ENCODE measurements at regions of chr16 and their contacts with region 1.

Region 1: GRCh38 chr16:21708533-21709115 is 44.9 kb downstream of the OTOA start:
- DNase-seq: peak; percentile 76
- H3K4me3 Mint-ChIP-seq: no peak overlapping the region
- H3K27ac Mint-ChIP-seq: no peak overlapping the region
- H3K4me1 Mint-ChIP-seq: peaks cover 2% of the 10 kb centered on the region
- H3K27me3 Mint-ChIP-seq: no peaks in the 10 kb centered on the region
- CTCF ChIP-seq: peak; percentile 69

Region 2: DNA sequence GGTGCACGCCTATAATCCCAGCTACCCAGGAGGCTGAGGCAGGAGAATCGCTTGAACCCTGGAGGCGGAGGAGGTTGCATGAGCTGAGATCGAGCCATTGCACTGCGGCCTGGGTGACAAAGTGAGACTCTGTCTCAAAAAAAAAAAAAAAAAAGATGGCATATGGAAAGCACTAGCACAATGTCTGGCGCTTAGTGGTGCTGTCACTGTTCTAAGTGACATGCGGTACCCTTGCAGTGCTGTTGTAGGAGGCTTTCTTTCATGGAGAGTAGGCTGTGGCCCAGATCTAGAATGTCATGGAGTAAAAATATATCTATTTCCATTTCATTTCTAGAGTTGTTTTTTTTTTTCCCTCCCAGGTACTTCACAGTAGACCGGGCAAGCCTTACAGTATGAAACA is 123.8 kb before region 1 on chr16:
- CTCF ChIA-PET with region 1: interaction called, 22 read pairs
- POLR2A ChIA-PET with region 1: no interaction called
- intact Hi-C with region 1: loop called (anchors 1 kb)
- DNase-seq: no peak
- H3K4me3 Mint-ChIP-seq: no peak overlapping the region
- H3K27ac Mint-ChIP-seq: no peak overlapping the region
- H3K4me1 Mint-ChIP-seq: no peaks in the 10 kb centered on the region
- H3K27me3 Mint-ChIP-seq: no peaks in the 10 kb centered on the region
- CTCF ChIP-seq: no peak

Region 3: GRCh38 chr16:21614896-21615295 is 93.7 kb before region 1 on chr16:
- CTCF ChIA-PET with region 1: no interaction called
- POLR2A ChIA-PET with region 1: no interaction called
- intact Hi-C with region 1: no loop called
- DNase-seq: no peak
- H3K4me3 Mint-ChIP-seq: no peak overlapping the region
- H3K27ac Mint-ChIP-seq: peak overlapping the region; percentile 75
- H3K4me1 Mint-ChIP-seq: peaks cover 21% of the 10 kb centered on the region
- H3K27me3 Mint-ChIP-seq: no peaks in the 10 kb centered on the region
- CTCF ChIP-seq: no peak

Region 4: GRCh38 chr16:21638573-21638975 is 70.0 kb before region 1 on chr16:
- CTCF ChIA-PET with region 1: interaction called, 17 read pairs
- POLR2A ChIA-PET with region 1: no interaction called
- intact Hi-C with region 1: no loop called
- DNase-seq: peak; percentile 51
- H3K4me3 Mint-ChIP-seq: no peak overlapping the region
- H3K27ac Mint-ChIP-seq: peak overlapping the region; percentile 18
- H3K4me1 Mint-ChIP-seq: peaks cover 8% of the 10 kb centered on the region
- H3K27me3 Mint-ChIP-seq: no peaks in the 10 kb centered on the region
- CTCF ChIP-seq: no peak

Region 5: DNA sequence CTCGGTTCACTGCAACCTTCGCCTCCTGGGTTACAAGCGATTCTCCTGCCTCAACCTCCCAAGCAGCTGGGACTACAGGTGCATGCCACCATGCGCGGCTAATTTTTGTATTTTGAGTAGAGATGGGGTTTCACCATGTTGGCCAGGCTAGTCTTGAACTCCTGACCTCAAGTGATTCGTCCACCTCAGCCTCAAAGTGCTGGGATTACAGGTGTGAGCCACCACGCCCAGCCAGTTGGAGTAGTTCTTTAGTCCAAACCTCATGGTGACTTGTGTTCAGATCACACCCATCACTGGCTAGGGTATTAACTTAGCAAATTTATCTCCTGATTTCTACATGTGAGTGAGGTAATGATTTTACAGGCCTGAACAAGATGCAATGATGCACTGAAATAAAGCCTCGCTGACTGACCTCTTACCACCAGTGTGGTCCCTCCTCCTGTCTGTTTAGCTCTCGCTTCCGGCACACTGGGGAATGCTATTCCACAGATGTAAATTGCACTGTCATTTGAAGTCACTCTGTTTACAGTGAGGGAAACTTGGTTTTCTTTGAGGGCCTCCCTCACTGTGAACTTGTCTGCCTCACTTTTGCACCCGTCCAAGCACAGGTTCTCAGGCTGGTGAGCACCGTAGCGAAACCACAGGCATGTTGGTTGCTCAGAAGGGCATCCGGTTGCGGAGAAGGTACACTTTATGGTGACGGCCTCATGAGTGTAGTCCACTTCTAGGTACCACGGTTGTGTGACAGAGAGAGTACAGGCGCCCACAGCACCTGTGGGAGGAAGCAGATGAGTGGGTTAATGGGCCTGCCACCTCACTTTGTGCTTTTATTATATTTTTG is 61.7 kb before region 1 on chr16:
- CTCF ChIA-PET with region 1: interaction called, 10 read pairs
- POLR2A ChIA-PET with region 1: no interaction called
- intact Hi-C with region 1: no loop called
- DNase-seq: no peak
- H3K4me3 Mint-ChIP-seq: no peak overlapping the region
- H3K27ac Mint-ChIP-seq: no peak overlapping the region
- H3K4me1 Mint-ChIP-seq: no peaks in the 10 kb centered on the region
- H3K27me3 Mint-ChIP-seq: no peaks in the 10 kb centered on the region
- CTCF ChIP-seq: no peak

Region 6: GRCh38 chr16:21656795-21657768 is 51.5 kb before region 1 on chr16:
- CTCF ChIA-PET with region 1: interaction called, 174 read pairs
- POLR2A ChIA-PET with region 1: interaction called, 4 read pairs
- intact Hi-C with region 1: loop called (anchors 1 kb)
- DNase-seq: peak; percentile 62
- H3K4me3 Mint-ChIP-seq: no peak overlapping the region
- H3K27ac Mint-ChIP-seq: no peak overlapping the region
- H3K4me1 Mint-ChIP-seq: peaks cover 5% of the 10 kb centered on the region
- H3K27me3 Mint-ChIP-seq: no peaks in the 10 kb centered on the region
- CTCF ChIP-seq: peak; percentile 74

Region 7: GRCh38 chr16:21698169-21699032 is 10.2 kb before region 1 on chr16:
- CTCF ChIA-PET with region 1: interaction called, 47 read pairs
- POLR2A ChIA-PET with region 1: no interaction called
- intact Hi-C with region 1: no loop called
- DNase-seq: no peak
- H3K4me3 Mint-ChIP-seq: no peak overlapping the region
- H3K27ac Mint-ChIP-seq: no peak overlapping the region
- H3K4me1 Mint-ChIP-seq: peaks cover 4% of the 10 kb centered on the region
- H3K27me3 Mint-ChIP-seq: peaks cover 11% of the 10 kb centered on the region
- CTCF ChIP-seq: no peak

Region 8: GRCh38 chr16:21719283-21719682 is 10.7 kb after region 1 on chr16:
- CTCF ChIA-PET with region 1: interaction called, 24 read pairs
- POLR2A ChIA-PET with region 1: no interaction called
- intact Hi-C with region 1: no loop called
- DNase-seq: no peak
- H3K4me3 Mint-ChIP-seq: no peak overlapping the region
- H3K27ac Mint-ChIP-seq: no peak overlapping the region
- H3K4me1 Mint-ChIP-seq: peaks cover 4% of the 10 kb centered on the region
- H3K27me3 Mint-ChIP-seq: no peaks in the 10 kb centered on the region
- CTCF ChIP-seq: no peak

Region 9: DNA sequence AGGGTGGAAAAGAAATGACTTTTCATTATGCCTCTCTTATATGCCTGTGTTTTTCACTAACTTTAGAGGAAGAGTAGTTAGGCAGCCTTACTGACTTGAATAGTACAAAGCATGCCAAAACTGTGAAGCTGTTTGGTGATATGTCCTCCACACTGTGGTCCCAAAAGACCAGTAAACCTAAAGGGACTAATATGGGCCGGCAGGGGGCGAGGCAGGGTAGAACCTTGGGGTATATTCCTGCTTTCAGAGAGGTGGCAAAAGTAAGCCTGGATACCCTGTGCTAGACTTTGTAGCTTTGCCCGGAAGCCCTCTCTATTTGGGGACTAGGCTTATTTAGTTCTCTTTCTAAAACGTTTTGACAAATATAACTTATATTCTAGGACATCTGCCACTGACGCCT is 347.3 kb after region 1 on chr16:
- CTCF ChIA-PET with region 1: no interaction called
- POLR2A ChIA-PET with region 1: no interaction called
- intact Hi-C with region 1: no loop called
- DNase-seq: no peak
- H3K4me3 Mint-ChIP-seq: no peak overlapping the region
- H3K27ac Mint-ChIP-seq: no peak overlapping the region
- H3K4me1 Mint-ChIP-seq: no peaks in the 10 kb centered on the region
- H3K27me3 Mint-ChIP-seq: no peaks in the 10 kb centered on the region
- CTCF ChIP-seq: no peak

Measured in MCF 10A (cell line).